A549 (cell line): ENCODE measurements at regions of chr11 and their contacts with region 1.

Region 1: GRCh38 chr11:59787816-59788215 is 22.8 kb downstream of the MRPL16 start:
- DNase-seq: no peak
- ATAC-seq: no peak
- H3K4me3 ChIP-seq: no peak overlapping the region
- H3K27ac ChIP-seq: no peak overlapping the region
- H3K4me1 ChIP-seq: peaks cover 19% of the 10 kb centered on the region
- CTCF ChIP-seq: no peak
- EP300 ChIP-seq: no peak
- POLR2A ChIP-seq: no peak
- RAD21 ChIP-seq: no peak

Region 2: DNA sequence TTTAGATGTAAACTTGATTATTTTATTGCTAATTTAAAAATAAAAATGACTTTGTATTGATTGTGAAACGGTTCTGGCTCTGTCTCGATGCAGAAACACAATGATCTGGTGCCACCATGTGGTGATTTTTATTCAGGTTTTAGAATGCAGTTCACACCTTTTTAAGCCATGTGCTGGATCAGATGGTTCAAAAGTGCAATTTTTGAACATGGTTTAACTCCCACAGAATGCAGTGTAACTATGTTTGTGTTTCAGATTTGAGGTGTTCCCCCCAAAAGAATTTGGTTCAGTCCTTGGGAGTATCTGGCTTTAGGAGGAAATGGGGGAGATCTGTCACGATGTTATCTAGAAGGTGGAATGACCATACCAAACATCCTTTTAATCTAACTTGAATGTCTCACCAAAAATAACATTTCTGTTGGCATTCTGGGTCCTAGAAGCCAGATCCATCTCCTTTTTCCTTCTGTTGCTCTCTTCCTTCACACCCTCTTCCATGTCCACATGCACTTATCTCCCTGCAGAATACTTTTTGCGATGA is 14.9 kb after region 1 on chr11:
- CTCF ChIA-PET with region 1: interaction called, 29 read pairs
- POLR2A ChIA-PET with region 1: interaction called, 3 read pairs
- DNase-seq: peak in 1 of 2 experiments; percentile 58
- ATAC-seq: peak; percentile 73 to 82; a peak in 5 of 6 replicates
- H3K4me3 ChIP-seq: no peak overlapping the region
- H3K27ac ChIP-seq: no peak overlapping the region
- H3K4me1 ChIP-seq: peaks cover 17% of the 10 kb centered on the region; the same call in 2 of the 3 replicates
- CTCF ChIP-seq: peak; percentile 92
- EP300 ChIP-seq: no peak
- POLR2A ChIP-seq: no peak
- RAD21 ChIP-seq: peak; percentile 91 to 94

Region 3: GRCh38 chr11:59818572-59818971 is 30.8 kb after region 1 on chr11:
- CTCF ChIA-PET with region 1: no interaction called
- POLR2A ChIA-PET with region 1: no interaction called
- DNase-seq: no peak
- ATAC-seq: no peak
- H3K4me3 ChIP-seq: no peak overlapping the region
- H3K27ac ChIP-seq: no peak overlapping the region
- H3K4me1 ChIP-seq: no peaks in the 10 kb centered on the region
- CTCF ChIP-seq: no peak
- EP300 ChIP-seq: no peak
- POLR2A ChIP-seq: no peak
- RAD21 ChIP-seq: no peak